ENCODE measurements at regions of chr21 and their contacts with region 1.

Region 1: GRCh38 chr21:28745131-28746016 is 247.3 kb downstream of the LTN1 start:
- DNase-seq: peak; percentile 92
- ATAC-seq: peak; percentile 86
- H3K4me3 ChIP-seq: peak overlapping the region; percentile 63
- H3K27ac ChIP-seq: peak overlapping the region; percentile 59
- H3K4me1 ChIP-seq: peaks cover 13% of the 10 kb centered on the region
- H3K27me3 ChIP-seq: no peaks in the 10 kb centered on the region
- CTCF ChIP-seq: peak; percentile 91

Region 2: GRCh38 chr21:27700974-27701614 is 1044.3 kb before region 1 on chr21:
- CTCF ChIA-PET with region 1: no interaction called
- POLR2A ChIA-PET with region 1: no interaction called
- intact Hi-C with region 1: loop called (anchors 1 kb)
- DNase-seq: peak; percentile 87
- ATAC-seq: peak; percentile 97
- H3K4me3 ChIP-seq: no peak overlapping the region
- H3K27ac ChIP-seq: no peak overlapping the region
- H3K4me1 ChIP-seq: no peaks in the 10 kb centered on the region
- H3K27me3 ChIP-seq: no peaks in the 10 kb centered on the region
- CTCF ChIP-seq: peak; percentile 96

Region 3: GRCh38 chr21:28445081-28445830 is 300.1 kb before region 1 on chr21:
- CTCF ChIA-PET with region 1: interaction called, 5 read pairs
- POLR2A ChIA-PET with region 1: no interaction called
- intact Hi-C with region 1: loop called (anchors 2 kb)
- DNase-seq: peak; percentile 91
- ATAC-seq: peak; percentile 95
- H3K4me3 ChIP-seq: no peak overlapping the region
- H3K27ac ChIP-seq: peak overlapping the region; percentile 87
- H3K4me1 ChIP-seq: peaks cover 22% of the 10 kb centered on the region
- H3K27me3 ChIP-seq: no peaks in the 10 kb centered on the region
- CTCF ChIP-seq: no peak

Region 4: GRCh38 chr21:28537371-28538079 is 207.8 kb before region 1 on chr21:
- CTCF ChIA-PET with region 1: no interaction called
- POLR2A ChIA-PET with region 1: interaction called, 3 read pairs
- intact Hi-C with region 1: loop called (anchors 5 kb)
- DNase-seq: peak; percentile 99
- ATAC-seq: peak; percentile 44
- H3K4me3 ChIP-seq: no peak overlapping the region
- H3K27ac ChIP-seq: peak overlapping the region; percentile 97
- H3K4me1 ChIP-seq: peaks cover 52% of the 10 kb centered on the region
- H3K27me3 ChIP-seq: no peaks in the 10 kb centered on the region
- CTCF ChIP-seq: no peak

Region 5: DNA sequence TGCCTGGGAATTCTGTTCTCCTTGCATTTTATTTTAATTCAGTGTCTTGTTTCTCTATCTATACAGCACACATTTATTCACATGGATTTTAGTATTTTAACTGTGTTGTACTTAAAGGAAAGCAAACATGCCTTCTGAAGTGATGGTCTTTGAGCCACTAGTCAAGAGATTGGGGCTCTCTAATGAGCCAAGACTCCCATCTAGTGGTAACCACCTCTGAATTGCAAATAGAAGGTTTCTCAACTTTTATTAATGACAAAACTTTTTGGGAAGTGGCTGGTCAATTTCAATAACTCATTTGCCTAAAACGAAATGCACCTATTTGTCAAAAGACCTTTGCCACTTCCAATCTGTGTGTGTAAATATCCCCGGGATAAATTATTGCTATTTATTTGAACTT is 47.7 kb after region 1 on chr21:
- CTCF ChIA-PET with region 1: interaction called, 3 read pairs
- POLR2A ChIA-PET with region 1: no interaction called
- intact Hi-C with region 1: loop called (anchors 1 kb)
- DNase-seq: peak; percentile 49
- ATAC-seq: peak; percentile 25; the same call in 1 of the 2 replicates
- H3K4me3 ChIP-seq: no peak overlapping the region
- H3K27ac ChIP-seq: no peak overlapping the region
- H3K4me1 ChIP-seq: peaks cover 23% of the 10 kb centered on the region
- H3K27me3 ChIP-seq: no peaks in the 10 kb centered on the region
- CTCF ChIP-seq: peak; percentile 66

Measured in PC-3 (cell line).